Right ventricle myocardium superior (tissue), 1 donor: ENCODE measurements at regions of chr2 and their contacts with region 1.

Region 1: GRCh38 chr2:39227628-39228412 is 15.9 kb downstream of the CDKL4 start:
- DNase-seq: peak; percentile 87
- ATAC-seq: peak; percentile 90

Region 2: DNA sequence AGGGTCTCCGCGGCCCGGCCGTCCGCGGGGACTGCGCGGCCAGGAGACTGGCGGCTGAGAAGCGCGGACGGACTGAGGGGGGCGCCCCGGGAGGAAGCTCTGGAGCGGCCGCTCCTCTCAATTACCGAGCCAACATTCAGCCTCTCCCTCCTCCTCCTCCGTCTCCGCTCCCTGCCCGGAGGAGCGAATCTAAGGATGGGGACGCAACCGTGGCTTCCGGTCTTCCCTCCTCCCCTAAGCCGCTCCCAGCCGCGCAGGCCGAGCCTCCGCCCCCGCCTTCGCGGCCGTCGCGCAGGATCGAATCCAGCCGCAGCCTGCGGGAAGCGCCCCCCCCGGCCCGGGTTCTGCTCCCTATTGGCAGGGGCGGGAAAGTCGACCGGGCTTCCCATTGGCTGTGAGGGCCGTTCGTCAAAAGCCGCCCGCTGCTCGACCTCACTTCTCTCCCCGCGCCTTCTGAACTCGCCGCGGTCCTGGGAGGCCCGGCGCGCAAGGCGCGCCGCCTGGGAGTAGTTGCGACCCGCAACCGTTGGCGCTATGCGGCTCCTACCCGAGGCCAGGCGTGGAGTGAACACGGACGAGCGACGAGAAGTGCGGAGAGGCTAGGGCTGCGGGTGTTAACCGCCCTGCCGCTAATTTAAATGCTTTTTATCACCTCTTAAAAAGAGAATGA is 625.0 kb before region 1 on chr2 and contains the start of gene HNRNPLL:
- intact Hi-C with region 1: no loop called
- DNase-seq: peak; percentile 99
- ATAC-seq: peak; percentile 95
- total RNA-seq, gene HNRNPLL: 28.3 TPM

Region 3: GRCh38 chr2:39059366-39059952 is 168.4 kb before region 1 on chr2:
- intact Hi-C with region 1: loop called (anchors 2 kb)
- DNase-seq: no peak
- ATAC-seq: peak; percentile 36

Region 4: GRCh38 chr2:39124000-39124745 is 103.6 kb before region 1 on chr2:
- intact Hi-C with region 1: loop called (anchors 2 kb)
- DNase-seq: peak; percentile 98
- ATAC-seq: peak; percentile 92

Region 5: GRCh38 chr2:39179974-39180970 is 47.5 kb before region 1 on chr2:
- intact Hi-C with region 1: no loop called
- DNase-seq: no peak
- ATAC-seq: no peak